ENCODE measurements at regions of chr12 and their contacts with region 1.

Region 1: GRCh38 chr12:56224102-56224701 is at the start of gene NABP2:
- DNase-seq: peak; percentile 74 to 97 (median 91)
- ATAC-seq: peak; percentile 64
- H3K4me3 ChIP-seq: peak within 1 kb of the TSS; percentile 65 to 68
- H3K4me3 Mint-ChIP-seq: peak within 1 kb of the TSS; percentile 95
- H3K27ac ChIP-seq: peak within 1 kb of the TSS; percentile 53 to 85
- H3K27ac Mint-ChIP-seq: peak within 1 kb of the TSS; percentile 99
- H3K4me1 ChIP-seq: peaks cover 29% of the 10 kb centered on the region
- H3K4me1 Mint-ChIP-seq: peaks cover 44% of the 10 kb centered on the region
- H3K27me3 ChIP-seq: no peaks in the 10 kb centered on the region
- H3K27me3 Mint-ChIP-seq: no peaks in the 10 kb centered on the region
- CTCF ChIP-seq: peak; percentile 84
- total RNA-seq, gene NABP2: 6.8 to 7.4 TPM

Region 2: GRCh38 chr12:55874443-55874842 is 349.8 kb before region 1 on chr12:
- CTCF ChIA-PET with region 1: no interaction called
- POLR2A ChIA-PET with region 1: no interaction called
- intact Hi-C with region 1: no loop called
- DNase-seq: no peak
- ATAC-seq: no peak
- H3K4me3 ChIP-seq: no peak overlapping the region
- H3K4me3 Mint-ChIP-seq: no peak overlapping the region
- H3K27ac ChIP-seq: no peak overlapping the region
- H3K27ac Mint-ChIP-seq: no peak overlapping the region
- H3K4me1 ChIP-seq: no peaks in the 10 kb centered on the region
- H3K4me1 Mint-ChIP-seq: no peaks in the 10 kb centered on the region
- H3K27me3 ChIP-seq: no peaks in the 10 kb centered on the region
- H3K27me3 Mint-ChIP-seq: no peaks in the 10 kb centered on the region
- CTCF ChIP-seq: no peak

Region 3: DNA sequence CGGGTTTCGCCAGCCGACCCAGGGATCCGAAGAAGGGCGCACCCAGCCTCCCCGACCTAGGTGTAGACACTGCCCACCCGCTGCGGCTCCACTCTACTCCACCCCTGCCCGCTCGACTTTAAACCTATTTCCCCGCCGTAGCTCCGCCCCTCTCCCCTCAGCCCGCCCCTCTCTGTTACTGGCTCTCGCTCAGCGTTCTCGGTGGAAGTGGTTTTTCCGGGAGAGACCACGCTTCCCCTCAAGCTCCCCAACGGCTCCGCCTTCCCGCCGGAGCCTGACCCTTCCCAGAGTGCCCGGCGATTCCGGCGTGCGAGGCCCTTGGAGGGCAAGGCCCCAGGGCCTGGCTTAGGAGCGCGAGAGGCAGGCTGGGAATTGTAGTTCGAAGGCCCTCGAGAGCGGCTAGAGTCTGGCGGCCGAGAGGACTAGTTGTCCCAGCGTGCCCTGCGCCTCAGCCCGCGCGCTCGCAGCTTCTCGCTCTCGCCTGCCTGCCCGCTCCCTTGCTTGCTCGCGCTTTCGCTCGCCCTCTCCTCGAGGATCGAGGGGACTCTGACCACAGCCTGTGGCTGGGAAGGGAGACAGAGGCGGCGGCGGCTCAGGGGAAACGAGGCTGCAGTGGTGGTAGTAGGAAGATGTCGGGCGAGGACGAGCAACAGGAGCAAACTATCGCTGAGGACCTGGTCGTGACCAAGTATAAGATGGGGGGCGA is 119.9 kb before region 1 on chr12 and contains the start of gene PA2G4:
- CTCF ChIA-PET with region 1: no interaction called
- POLR2A ChIA-PET with region 1: interaction called, 11 read pairs
- intact Hi-C with region 1: no loop called
- DNase-seq: peak; percentile 91 to 99 (median 96)
- ATAC-seq: peak; percentile 88
- H3K4me3 ChIP-seq: peak within 1 kb of the TSS; percentile 90
- H3K4me3 Mint-ChIP-seq: peak within 1 kb of the TSS; percentile 99
- H3K27ac ChIP-seq: peak within 1 kb of the TSS; percentile 53 to 70
- H3K27ac Mint-ChIP-seq: peak within 1 kb of the TSS; percentile 98
- H3K4me1 ChIP-seq: peaks cover 37% of the 10 kb centered on the region
- H3K4me1 Mint-ChIP-seq: peaks cover 66% of the 10 kb centered on the region
- H3K27me3 ChIP-seq: no peaks in the 10 kb centered on the region
- H3K27me3 Mint-ChIP-seq: no peaks in the 10 kb centered on the region
- CTCF ChIP-seq: no peak
- total RNA-seq, gene PA2G4: 61.6 to 62.4 TPM

Region 4: GRCh38 chr12:56152318-56153033 is 71.7 kb before region 1 on chr12 and contains the start of gene MYL6B:
- CTCF ChIA-PET with region 1: no interaction called
- POLR2A ChIA-PET with region 1: no interaction called
- intact Hi-C with region 1: loop called in 1 of 2 experiments (anchors 2 kb)
- DNase-seq: peak; percentile 80 to 96 (median 93)
- ATAC-seq: peak; percentile 90
- H3K4me3 ChIP-seq: peak within 1 kb of the TSS; percentile 65 to 95
- H3K4me3 Mint-ChIP-seq: peak within 1 kb of the TSS; percentile 90
- H3K27ac ChIP-seq: peak within 1 kb of the TSS; percentile 75 to 90
- H3K27ac Mint-ChIP-seq: peak within 1 kb of the TSS; percentile 99
- H3K4me1 ChIP-seq: peaks cover 30% of the 10 kb centered on the region
- H3K4me1 Mint-ChIP-seq: peaks cover 29% of the 10 kb centered on the region
- H3K27me3 ChIP-seq: no peaks in the 10 kb centered on the region
- H3K27me3 Mint-ChIP-seq: no peaks in the 10 kb centered on the region
- CTCF ChIP-seq: no peak
- total RNA-seq, gene MYL6B: 4.0 to 5.9 TPM

Region 5: DNA sequence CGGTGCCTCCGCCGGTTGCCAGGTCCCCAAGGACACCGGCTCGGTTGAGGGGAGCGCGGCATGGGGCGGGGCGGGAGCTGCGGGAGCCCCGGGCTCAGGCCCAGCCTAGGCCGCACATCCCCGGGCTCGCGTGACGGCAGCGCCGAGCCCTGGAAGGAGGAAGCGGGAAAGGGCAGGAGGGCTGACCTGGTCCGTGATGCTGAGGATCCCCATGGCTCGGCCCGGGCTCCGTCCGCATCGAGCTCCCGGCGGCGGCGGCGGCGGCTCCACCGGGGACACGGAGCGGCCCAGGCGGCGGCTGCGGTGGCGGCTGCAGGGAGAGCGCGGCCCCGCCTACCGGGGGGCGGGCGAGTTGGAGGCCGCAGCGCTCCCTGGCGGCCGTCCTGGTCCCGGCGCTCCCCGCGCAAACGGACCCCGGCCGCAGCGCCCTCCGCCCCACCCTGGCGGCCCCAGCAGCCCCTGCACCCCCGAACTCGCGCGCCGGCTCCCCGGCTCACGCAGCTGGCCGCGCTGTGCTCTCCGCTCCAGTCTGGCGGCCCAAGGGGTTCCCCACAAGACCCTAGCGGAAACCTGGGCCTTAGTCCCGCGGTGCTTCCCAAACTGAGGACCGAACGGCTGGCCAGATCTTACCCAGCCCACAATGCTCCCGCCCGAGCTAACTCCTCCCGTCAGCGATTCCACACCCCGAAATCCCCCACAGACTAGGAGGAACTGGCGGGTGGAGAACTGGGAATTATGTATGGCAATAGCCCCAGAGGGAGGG is 34.0 kb after region 1 on chr12 and contains the start of gene ANKRD52:
- CTCF ChIA-PET with region 1: interaction called, 7 read pairs
- POLR2A ChIA-PET with region 1: interaction called, 15 read pairs
- intact Hi-C with region 1: loop called (anchors 1 to 2 kb)
- DNase-seq: peak; percentile 61 to 92 (median 77)
- ATAC-seq: peak; percentile 95
- H3K4me3 ChIP-seq: peak within 1 kb of the TSS; percentile 79 to 99
- H3K4me3 Mint-ChIP-seq: peak within 1 kb of the TSS; percentile 94
- H3K27ac ChIP-seq: peak within 1 kb of the TSS; percentile 77
- H3K27ac Mint-ChIP-seq: peak within 1 kb of the TSS; percentile 88
- H3K4me1 ChIP-seq: peaks cover 21% of the 10 kb centered on the region
- H3K4me1 Mint-ChIP-seq: peaks cover 21% of the 10 kb centered on the region
- H3K27me3 ChIP-seq: no peaks in the 10 kb centered on the region
- H3K27me3 Mint-ChIP-seq: no peaks in the 10 kb centered on the region
- CTCF ChIP-seq: peak; percentile 64
- total RNA-seq, gene ANKRD52: 27.7 to 29.9 TPM

Region 6: DNA sequence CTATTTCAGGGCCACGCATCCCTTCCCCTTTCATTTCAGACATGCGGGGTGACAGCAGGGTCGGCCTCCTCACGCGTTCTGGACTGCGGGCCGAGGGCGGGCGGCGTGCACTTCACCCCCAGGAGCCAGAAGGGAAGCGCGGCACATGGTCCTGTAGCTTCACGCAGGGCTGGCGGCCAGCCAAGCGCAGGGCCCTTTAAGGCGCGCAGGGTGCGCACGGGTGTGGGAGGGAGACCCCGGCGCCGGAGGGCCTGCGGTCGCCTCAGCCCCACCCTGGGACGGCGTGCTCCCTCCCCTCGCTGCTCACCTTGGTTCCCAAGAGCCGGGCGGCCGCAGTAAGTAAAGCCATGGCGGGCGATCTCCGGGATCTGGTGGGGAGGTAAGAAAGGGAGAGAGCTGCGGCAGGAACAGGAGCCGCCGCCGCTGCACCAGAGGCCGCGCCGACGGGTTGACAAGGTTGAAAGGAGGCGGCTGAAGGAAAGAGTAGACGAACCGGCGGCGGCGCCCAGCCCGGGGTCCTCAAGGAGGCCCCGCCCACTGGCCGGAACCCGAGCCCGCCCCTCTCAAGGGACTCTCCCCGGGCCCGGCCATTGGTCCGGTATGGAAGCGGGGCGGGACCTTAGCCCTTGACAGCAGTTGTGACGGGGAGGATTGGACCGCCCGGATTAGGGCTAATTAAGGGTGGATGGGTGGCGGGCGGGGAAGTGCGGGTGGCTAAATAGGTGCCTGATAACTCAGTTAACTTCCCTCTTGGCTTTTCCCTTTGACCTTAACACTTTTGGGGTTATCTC is 75.8 kb after region 1 on chr12 and contains the start of gene CS:
- CTCF ChIA-PET with region 1: no interaction called
- POLR2A ChIA-PET with region 1: no interaction called
- intact Hi-C with region 1: loop called in 1 of 2 experiments (anchors 1 kb)
- DNase-seq: peak; percentile 97 to 99 (median 99)
- ATAC-seq: peak; percentile 95
- H3K4me3 ChIP-seq: peak within 1 kb of the TSS; percentile 67 to 80
- H3K4me3 Mint-ChIP-seq: peak within 1 kb of the TSS; percentile 95
- H3K27ac ChIP-seq: peak within 1 kb of the TSS; percentile 77 to 95
- H3K27ac Mint-ChIP-seq: peak within 1 kb of the TSS; percentile 94
- H3K4me1 ChIP-seq: peaks cover 45% of the 10 kb centered on the region
- H3K4me1 Mint-ChIP-seq: peaks cover 55% of the 10 kb centered on the region
- H3K27me3 ChIP-seq: no peaks in the 10 kb centered on the region
- H3K27me3 Mint-ChIP-seq: no peaks in the 10 kb centered on the region
- CTCF ChIP-seq: no peak
- total RNA-seq, gene CS: 154 to 159 TPM

Region 7: DNA sequence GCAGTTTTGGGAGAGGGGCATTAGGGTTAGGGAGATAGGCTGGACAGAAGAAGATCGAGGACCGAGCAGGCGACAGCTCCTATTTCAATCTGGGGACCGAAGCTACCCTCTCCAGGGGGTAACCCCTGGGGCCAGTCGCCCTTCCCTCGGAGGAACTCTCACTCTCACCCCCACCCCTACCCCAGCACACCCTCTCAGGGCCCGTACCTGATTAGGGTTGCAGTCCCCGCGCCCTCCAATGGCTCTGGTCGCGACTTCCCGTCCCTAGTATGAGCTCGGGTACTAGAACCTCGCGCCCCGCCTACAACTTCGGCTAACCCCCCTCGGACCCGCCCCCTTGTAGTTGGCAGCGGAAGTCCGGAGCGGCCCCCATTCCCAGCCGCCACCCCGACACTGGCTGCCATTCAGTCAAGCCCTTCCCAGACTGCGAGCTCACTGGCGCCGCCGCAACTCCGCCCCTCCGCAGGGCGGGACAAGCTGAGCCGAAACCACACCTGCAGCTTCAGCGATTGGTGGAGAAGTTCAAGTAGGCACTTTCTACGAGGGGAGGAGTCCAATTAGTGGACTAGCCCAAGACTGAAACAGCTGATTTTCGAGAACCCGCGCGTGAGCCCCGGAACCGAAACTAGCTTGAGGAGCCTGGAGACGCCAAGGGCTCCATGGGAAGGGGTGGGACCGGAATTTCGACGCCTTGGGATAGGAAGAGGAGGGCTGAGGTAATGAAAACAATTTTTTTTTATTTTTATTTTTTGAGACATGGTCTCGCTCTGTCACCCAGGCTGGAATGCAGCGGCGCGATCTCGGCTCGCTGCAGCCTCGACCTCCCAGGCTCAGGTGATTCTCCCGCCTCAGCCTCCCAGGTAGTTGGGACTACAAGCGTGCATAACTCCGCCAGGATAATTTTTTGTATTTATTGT is 135.9 kb after region 1 on chr12 and contains the start of gene STAT2:
- CTCF ChIA-PET with region 1: no interaction called
- POLR2A ChIA-PET with region 1: interaction called, 8 read pairs
- intact Hi-C with region 1: loop called in 1 of 2 experiments (anchors 1 kb)
- DNase-seq: peak; percentile 98 to 100 (median 99)
- ATAC-seq: peak; percentile 93
- H3K4me3 ChIP-seq: peak within 1 kb of the TSS; percentile 78 to 81
- H3K4me3 Mint-ChIP-seq: peak within 1 kb of the TSS; percentile 95
- H3K27ac ChIP-seq: peak within 1 kb of the TSS; percentile 76 to 78
- H3K27ac Mint-ChIP-seq: peak within 1 kb of the TSS; percentile 95
- H3K4me1 ChIP-seq: peaks cover 23% of the 10 kb centered on the region
- H3K4me1 Mint-ChIP-seq: peaks cover 34% of the 10 kb centered on the region
- H3K27me3 ChIP-seq: no peaks in the 10 kb centered on the region
- H3K27me3 Mint-ChIP-seq: no peaks in the 10 kb centered on the region
- CTCF ChIP-seq: no peak
- total RNA-seq, gene STAT2: 71.8 to 81.9 TPM